Mucosa of descending colon (tissue), 3 donors: ENCODE measurements at regions of chr17 and their contacts with region 1.

Region 1: DNA sequence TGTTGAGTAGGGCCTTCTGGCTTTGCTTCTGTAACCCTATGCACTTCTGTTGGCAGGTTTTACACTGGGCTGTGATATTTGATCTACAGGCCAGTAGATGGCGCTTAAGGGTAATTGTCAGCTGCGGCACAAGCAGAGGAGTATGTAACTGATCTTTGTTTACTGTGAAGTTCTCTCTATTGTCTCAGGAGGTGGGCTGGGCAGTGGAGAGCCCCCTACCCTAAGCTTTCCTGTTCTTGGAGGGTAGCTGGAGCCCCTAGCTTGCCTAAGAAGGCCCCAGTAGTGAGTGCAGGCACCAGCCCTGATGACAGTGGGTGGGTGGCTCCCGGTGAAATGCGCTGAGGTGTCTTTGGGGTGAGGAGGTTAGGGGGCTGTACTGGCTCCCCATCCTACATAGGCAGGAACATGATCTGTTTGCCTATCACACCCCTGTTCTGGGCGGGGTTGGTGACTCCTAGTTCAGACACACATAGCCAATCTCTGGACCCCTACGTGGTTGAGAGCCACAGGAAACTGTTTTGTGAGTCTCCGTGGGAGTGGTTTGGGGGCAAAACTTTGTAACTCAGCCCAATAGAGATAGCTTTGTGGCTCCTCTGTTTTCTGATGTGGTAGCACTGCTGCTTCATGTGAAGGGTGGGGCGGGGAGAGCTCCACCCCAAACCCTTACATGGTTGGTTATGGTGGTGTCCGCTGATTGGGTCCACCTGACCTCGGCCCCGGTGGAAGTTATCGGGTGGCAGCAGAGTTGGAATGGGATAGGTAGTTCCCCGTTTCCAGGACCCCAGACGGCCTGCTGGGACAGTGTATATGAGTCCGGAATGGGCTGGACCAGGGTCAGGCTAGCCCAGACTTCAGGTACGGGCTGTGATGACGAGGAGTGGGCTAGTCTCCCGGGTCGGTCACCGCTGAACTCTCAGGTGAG is 60.4 kb downstream of the SLFN11 start:
- DNase-seq: peak; percentile 46 to 76 (median 47)
- ATAC-seq: peak; percentile 89
- H3K4me3 ChIP-seq: no peak overlapping the region
- H3K4me1 ChIP-seq: no peaks in the 10 kb centered on the region
- CTCF ChIP-seq: peak; percentile 60

Region 2: DNA sequence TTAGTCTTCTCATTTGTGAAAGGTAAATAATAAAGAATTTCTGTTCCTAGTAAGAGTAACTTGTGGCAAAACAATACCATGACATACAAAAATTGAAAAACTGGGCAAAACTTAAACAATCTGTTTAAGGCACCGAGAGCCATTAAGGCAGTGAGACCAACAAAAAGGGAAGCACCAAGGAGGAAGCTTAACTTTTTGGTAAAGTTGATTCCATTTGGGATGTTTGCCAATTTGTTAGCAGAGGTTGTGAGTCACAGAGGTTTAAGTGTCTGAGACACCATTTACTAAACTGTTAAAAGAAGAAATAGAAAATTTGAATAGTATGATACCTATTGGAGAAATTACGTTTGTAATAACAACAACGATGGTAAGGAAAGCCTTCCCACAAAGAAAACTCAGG is 123.8 kb before region 1 on chr17:
- intact Hi-C with region 1: no loop called
- DNase-seq: no peak
- ATAC-seq: no peak
- H3K4me3 ChIP-seq: no peak overlapping the region
- H3K4me1 ChIP-seq: no peaks in the 10 kb centered on the region
- CTCF ChIP-seq: no peak

Region 3: DNA sequence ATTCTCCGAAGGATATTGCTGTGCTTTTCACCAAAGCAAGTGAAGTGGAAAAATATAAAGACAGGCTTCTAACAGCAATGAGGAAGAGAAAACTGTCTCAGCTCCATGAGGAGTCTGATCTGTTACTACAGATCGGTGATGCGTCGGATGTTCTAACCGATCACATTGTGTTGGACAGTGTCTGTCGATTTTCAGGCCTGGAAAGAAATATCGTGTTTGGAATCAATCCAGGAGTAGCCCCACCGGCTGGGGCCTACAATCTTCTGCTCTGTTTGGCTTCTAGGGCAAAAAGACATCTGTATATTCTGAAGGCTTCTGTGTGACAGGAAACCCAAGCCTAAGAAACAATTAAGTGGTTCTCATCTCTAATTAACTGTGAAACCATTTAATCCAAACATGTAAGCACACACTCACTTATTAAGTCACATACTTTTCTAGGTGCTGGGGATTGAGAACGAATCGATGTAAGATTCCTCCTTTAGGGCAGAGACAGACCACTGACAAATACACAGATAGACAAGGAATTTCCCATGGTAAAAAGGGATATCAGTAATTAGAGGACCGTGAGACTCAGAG is 47.4 kb before region 1 on chr17:
- intact Hi-C with region 1: no loop called
- DNase-seq: no peak
- ATAC-seq: no peak
- H3K4me3 ChIP-seq: no peak overlapping the region
- H3K4me1 ChIP-seq: no peaks in the 10 kb centered on the region
- CTCF ChIP-seq: no peak

Region 4: GRCh38 chr17:35529866-35530265 is 216.8 kb after region 1 on chr17:
- intact Hi-C with region 1: loop called (anchors 5 kb)
- DNase-seq: no peak
- ATAC-seq: no peak
- H3K4me3 ChIP-seq: no peak overlapping the region
- H3K4me1 ChIP-seq: no peaks in the 10 kb centered on the region
- CTCF ChIP-seq: no peak

Region 5: GRCh38 chr17:35537601-35538141 is 224.6 kb after region 1 on chr17 and contains the start of gene SLFN12L:
- intact Hi-C with region 1: loop called (anchors 5 kb)
- DNase-seq: no peak
- ATAC-seq: peak; percentile 28
- H3K4me3 ChIP-seq: no peak within 1 kb of the TSS
- H3K4me1 ChIP-seq: no peaks in the 10 kb centered on the region
- CTCF ChIP-seq: no peak
- total RNA-seq, gene SLFN12L: 1.5 to 2.9 (median 2.9) TPM

Region 6: DNA sequence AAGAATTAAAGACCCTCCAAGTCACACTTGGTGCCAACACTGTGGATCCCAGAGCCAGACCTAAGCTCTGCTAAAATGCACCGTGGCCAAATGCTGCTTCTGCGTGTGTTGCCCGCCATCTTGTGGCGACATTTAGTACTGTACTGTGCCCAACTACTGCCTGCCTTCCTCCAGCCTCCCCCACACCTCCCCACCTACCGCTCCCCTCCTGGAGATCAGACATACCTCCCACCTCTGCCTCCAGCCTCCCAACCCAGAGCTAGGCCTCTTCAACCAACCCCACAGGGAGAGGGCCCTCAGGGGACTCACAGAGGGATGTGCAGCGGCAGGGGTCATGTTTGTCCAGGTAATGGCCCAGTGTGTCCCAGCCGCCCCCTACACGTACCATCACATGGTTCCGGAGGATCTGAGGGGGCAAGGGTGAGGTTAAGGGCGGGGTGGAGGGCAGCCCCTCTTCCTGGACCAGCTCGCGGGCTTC is 434.5 kb after region 1 on chr17:
- intact Hi-C with region 1: loop called in 1 of 2 experiments (anchors 5 kb)
- DNase-seq: peak in 2 of 3 donors; percentile 76 to 90
- ATAC-seq: peak; percentile 86
- H3K4me3 ChIP-seq: no peak overlapping the region
- H3K4me1 ChIP-seq: no peaks in the 10 kb centered on the region
- CTCF ChIP-seq: peak; percentile 60